Dorsolateral prefrontal cortex (tissue), 120 donors: ENCODE measurements at regions of chr1 and their contacts with region 1.

Region 1: GRCh38 chr1:117758444-117759316 is 152.8 kb downstream of the TENT5C start:
- DNase-seq: peak; percentile 38 to 80 (median 70)
- H3K4me3 ChIP-seq: peak overlapping the region; percentile 38 to 80 (median 60)
- H3K27ac ChIP-seq: peak overlapping the region in 3 of 59 donors; percentile 14 to 71 (median 58)
- H3K27me3 ChIP-seq: peaks cover 0 to 11% (median 0%) of the 10 kb centered on the region in 45 donors
- CTCF ChIP-seq: peak; percentile 72 to 94 (median 89)

Region 2: GRCh38 chr1:117067533-117068370 is 690.9 kb before region 1 on chr1:
- intact Hi-C with region 1: loop called (anchors 2 to 10 kb)
- DNase-seq: peak; percentile 31 to 78 (median 70)
- H3K4me3 ChIP-seq: no peak overlapping the region
- H3K27ac ChIP-seq: no peak overlapping the region
- H3K27me3 ChIP-seq: no peaks in the 10 kb centered on the region
- CTCF ChIP-seq: peak; percentile 46 to 99 (median 93)

Region 3: GRCh38 chr1:117512743-117513321 is 245.8 kb before region 1 on chr1:
- intact Hi-C with region 1: loop called in 1 of 2 experiments (anchors 2 kb)
- DNase-seq: no peak
- H3K4me3 ChIP-seq: no peak overlapping the region
- H3K27ac ChIP-seq: no peak overlapping the region
- H3K27me3 ChIP-seq: no peaks in the 10 kb centered on the region
- CTCF ChIP-seq: peak; percentile 24 to 79 (median 63)

Region 4: DNA sequence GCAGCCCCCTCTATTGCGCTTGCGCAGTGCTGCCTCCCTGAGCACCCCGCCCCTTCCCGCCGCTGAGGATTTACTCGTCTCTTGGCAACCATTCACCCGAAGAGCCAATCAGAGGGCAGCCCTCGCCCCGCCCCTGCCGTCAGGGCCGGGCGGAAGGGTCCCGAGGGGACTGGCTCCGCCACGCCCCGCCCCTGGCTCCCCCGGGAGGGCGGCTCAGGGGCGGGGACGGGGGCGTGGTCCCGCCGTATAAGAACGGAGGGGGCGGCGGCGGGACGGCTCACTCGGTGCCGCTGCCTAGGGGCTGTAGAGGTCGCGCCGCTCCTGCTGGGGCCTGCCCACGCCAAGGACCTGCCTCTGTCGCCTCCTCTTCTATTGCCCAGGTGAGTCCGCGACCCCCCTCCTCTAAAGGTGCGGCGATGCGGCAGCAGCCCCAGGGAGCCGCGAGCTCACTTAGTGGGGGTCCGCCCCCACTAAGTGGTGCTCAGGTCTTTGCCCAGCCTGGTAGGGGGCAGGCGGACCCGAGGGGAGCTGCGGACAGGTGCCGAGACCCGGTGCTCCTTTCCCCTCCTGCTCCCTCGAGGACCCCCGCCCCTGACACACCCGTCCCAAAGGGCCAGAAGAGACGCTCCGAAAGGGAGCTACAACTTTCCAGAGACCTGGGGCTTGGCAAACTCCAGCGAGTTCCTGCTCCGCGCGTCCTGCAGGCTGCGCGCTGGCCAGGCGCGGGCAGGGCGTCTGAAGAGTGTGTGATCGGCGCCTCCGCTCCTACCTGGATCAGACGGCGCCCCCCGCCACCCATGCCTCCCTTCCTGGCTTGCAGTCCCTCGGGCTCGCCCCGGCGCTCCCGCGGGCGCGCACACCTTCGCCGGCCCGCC is 152.7 kb before region 1 on chr1 and contains the start of gene TENT5C:
- intact Hi-C with region 1: loop called in 1 of 2 experiments (anchors 5 kb)
- DNase-seq: peak; percentile 85 to 96 (median 93)
- H3K4me3 ChIP-seq: peak within 1 kb of the TSS; percentile 48 to 92 (median 78)
- H3K27ac ChIP-seq: peak within 1 kb of the TSS in 43 of 59 donors; percentile 9 to 86 (median 60)
- H3K27me3 ChIP-seq: no peaks in the 10 kb centered on the region
- CTCF ChIP-seq: peak in 14 of 56 donors; percentile 1 to 32 (median 12)
- total RNA-seq, gene TENT5C: 0.36 to 7.0 (median 1.1) TPM

Region 5: DNA sequence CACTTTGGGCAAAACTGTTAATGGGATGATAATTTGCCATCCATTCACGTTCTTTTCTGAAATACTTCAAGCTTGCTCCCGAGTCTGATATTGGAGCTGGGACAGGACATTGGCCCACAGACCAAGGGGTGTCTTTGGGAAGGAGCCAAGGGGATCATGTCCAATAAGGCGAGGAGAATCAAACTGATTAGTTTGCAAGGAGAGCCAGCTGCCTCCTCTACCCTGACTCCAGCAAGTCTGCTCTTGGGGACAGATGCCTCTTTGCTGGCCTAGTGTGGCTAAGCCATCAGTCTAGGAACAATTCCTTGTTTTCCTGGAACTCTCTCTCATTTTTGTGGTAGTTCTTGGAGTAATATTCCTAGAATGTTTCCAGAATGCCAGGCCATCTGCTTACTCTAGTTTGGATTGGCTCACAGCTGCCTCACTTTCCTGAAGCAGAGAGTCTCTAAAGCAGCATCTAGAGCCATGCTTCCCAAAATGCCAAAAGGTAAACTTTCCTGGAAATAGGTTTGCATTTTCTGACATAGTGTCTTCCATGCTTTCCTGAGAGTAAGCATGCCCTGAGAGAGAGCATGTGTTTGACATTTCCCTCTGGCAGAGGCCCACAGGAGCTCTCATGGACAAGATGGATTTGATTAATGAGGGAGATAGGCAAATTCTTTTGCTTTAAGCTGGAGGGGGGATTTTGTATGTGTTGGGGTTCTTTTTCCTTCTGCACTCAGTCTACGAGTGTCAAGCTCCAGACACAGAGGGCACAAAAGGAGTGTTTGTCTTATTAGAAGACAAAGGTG is 25.1 kb after region 1 on chr1:
- intact Hi-C with region 1: no loop called
- DNase-seq: peak in 1 of 10 donors; percentile 23
- H3K4me3 ChIP-seq: no peak overlapping the region
- H3K27ac ChIP-seq: no peak overlapping the region
- H3K27me3 ChIP-seq: peaks cover 0 to 3% (median 0%) of the 10 kb centered on the region in 45 donors
- CTCF ChIP-seq: no peak

Region 6: GRCh38 chr1:117795190-117795589 is 36.5 kb after region 1 on chr1:
- intact Hi-C with region 1: no loop called
- DNase-seq: no peak
- H3K4me3 ChIP-seq: no peak overlapping the region
- H3K27ac ChIP-seq: no peak overlapping the region
- H3K27me3 ChIP-seq: peaks cover 0 to 5% (median 0%) of the 10 kb centered on the region in 45 donors
- CTCF ChIP-seq: no peak

Region 7: DNA sequence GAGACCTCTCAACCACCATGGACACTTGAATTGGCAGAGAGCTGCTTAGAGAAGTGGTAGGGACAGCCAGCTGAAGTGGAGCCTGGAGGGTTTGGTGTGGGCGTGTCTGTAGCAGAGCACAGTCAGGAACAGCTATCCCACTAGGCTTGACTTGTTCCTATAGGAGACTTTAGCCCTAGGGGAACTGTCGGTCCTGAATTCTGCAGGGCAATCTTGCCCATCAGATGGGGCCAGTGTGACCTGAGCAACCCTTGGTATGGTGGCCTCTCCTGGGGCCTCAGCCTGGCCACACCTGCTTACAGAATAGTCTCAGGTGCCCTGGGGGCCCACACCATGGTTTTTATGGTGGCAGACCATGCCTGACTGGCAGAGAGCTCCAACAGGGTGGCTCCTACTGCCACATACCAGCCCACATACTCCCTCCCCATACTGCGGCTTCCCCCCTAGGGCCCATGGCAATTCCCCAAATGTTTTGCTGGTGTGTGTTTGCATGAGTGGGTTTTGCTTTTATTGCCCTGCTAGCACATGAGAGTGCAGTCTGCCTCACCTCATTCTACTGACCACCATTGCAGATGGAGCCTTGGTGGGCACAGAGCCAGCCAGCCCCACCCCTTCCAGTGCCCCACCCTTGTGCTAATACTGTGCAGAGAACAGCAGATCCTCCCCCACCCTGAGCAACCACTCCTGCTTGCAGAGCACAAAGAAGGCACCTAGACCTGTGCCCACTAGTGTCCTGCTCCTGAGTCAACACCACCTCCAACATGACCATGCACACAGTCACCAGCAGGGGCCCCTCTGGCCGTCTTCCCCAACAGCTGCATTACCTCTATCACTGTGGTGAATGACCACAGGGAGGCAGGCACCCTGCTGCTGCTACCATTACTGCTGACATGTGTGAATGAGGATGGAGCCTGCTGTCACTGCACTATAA is 83.8 kb after region 1 on chr1:
- intact Hi-C with region 1: no loop called
- DNase-seq: no peak
- H3K4me3 ChIP-seq: no peak overlapping the region
- H3K27ac ChIP-seq: no peak overlapping the region
- H3K27me3 ChIP-seq: no peaks in the 10 kb centered on the region
- CTCF ChIP-seq: no peak